Calu3 (cell line): ENCODE measurements at regions of chr5 and their contacts with region 1.

Region 1: GRCh38 chr5:148998174-148998797 is 64.6 kb downstream of the SH3TC2 start:
- DNase-seq: peak; percentile 76
- H3K4me3 Mint-ChIP-seq: no peak overlapping the region
- H3K27ac Mint-ChIP-seq: peak overlapping the region; percentile 25
- H3K4me1 Mint-ChIP-seq: peaks cover 76% of the 10 kb centered on the region
- H3K27me3 Mint-ChIP-seq: no peaks in the 10 kb centered on the region
- CTCF ChIP-seq: peak; percentile 56

Region 2: DNA sequence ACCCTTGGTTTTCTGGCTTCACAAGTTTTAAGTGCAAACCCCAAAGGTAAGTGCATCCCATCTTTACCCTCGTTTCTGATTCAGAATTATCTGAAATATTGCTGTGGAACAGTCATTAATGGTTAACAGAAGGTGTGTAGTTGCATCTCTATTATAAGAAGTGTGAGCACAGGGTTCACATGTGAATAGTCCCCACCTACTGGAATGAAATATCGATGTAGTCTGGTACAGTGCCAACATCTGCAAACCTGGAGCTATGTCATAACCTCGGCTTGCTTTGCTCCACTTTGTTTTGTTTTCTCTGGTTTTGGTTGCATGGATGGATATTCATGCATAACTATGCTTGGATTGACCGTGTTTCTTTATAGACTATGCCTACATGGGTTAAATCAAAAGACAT is 356.6 kb before region 1 on chr5:
- CTCF ChIA-PET with region 1: no interaction called
- intact Hi-C with region 1: no loop called
- DNase-seq: peak; percentile 20
- H3K4me3 Mint-ChIP-seq: no peak overlapping the region
- H3K27ac Mint-ChIP-seq: no peak overlapping the region
- H3K4me1 Mint-ChIP-seq: peaks cover 18% of the 10 kb centered on the region
- H3K27me3 Mint-ChIP-seq: peaks cover 54% of the 10 kb centered on the region
- CTCF ChIP-seq: no peak

Region 3: GRCh38 chr5:148826053-148826738 is 172.1 kb before region 1 on chr5 and contains the start of gene ADRB2:
- CTCF ChIA-PET with region 1: interaction called, 4 read pairs
- intact Hi-C with region 1: loop called (anchors 1 kb)
- DNase-seq: peak; percentile 99
- H3K4me3 Mint-ChIP-seq: peak within 1 kb of the TSS; percentile 88
- H3K27ac Mint-ChIP-seq: peak within 1 kb of the TSS; percentile 79
- H3K4me1 Mint-ChIP-seq: peaks cover 16% of the 10 kb centered on the region
- H3K27me3 Mint-ChIP-seq: no peaks in the 10 kb centered on the region
- CTCF ChIP-seq: no peak
- total RNA-seq, gene ADRB2: 16.6 and 16.9 TPM in 2 replicates

Region 4: GRCh38 chr5:148912714-148913398 is 85.4 kb before region 1 on chr5:
- CTCF ChIA-PET with region 1: interaction called, 7 read pairs
- intact Hi-C with region 1: loop called (anchors 1 kb)
- DNase-seq: peak; percentile 68
- H3K4me3 Mint-ChIP-seq: no peak overlapping the region
- H3K27ac Mint-ChIP-seq: peak overlapping the region; percentile 93
- H3K4me1 Mint-ChIP-seq: peaks cover 89% of the 10 kb centered on the region
- H3K27me3 Mint-ChIP-seq: no peaks in the 10 kb centered on the region
- CTCF ChIP-seq: peak; percentile 28

Region 5: DNA sequence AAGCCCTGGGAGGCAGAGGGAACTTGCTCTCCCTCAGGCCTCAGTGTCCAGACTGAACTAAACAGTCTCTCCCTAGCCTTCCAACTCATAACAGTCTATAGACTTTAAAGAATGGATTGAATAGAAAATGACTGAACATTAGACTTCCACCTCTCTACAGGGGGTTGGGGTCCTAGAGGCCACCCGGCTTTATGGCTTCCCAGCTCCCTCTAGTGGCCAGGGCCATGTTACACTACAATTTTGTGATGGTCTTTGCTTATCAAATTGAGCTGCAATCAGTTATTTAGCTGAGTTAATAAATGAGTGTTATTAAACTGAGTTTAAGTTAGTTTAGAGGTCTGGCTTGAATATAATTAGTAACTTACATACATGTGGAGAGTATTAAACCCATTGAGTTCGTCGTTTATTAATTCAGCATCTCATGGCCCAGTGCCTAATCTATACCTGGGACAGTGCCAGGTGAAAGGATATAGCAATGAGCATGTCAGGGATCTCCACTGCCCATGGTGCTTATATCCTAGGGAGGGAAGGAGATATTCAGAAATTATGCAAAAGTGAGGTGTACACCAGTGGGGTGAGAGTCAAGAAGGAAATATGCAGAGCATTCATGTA is 40.6 kb before region 1 on chr5:
- CTCF ChIA-PET with region 1: interaction called, 14 read pairs
- intact Hi-C with region 1: loop called (anchors 2 kb)
- DNase-seq: peak; percentile 79
- H3K4me3 Mint-ChIP-seq: no peak overlapping the region
- H3K27ac Mint-ChIP-seq: no peak overlapping the region
- H3K4me1 Mint-ChIP-seq: peaks cover 68% of the 10 kb centered on the region
- H3K27me3 Mint-ChIP-seq: no peaks in the 10 kb centered on the region
- CTCF ChIP-seq: peak; percentile 93

Region 6: DNA sequence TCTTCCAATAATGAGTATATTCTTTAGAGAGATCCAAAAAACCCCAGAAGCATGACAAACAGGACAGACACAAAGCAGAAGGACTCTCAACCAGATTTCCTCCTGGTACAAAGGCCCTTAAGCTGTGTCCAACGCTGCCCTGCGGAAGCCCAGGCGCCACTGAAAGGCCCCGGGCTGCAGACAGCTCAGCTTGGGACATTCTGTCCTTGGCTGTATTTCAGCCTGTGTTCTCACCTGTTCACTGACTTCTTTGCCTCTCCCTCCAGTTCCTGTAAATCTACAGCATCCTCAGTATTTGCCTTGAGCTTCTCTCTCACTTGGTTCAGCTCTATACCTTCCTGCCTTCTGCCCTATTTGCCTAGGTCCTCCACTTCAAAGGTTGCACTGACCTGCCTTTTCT is 31.9 kb before region 1 on chr5:
- CTCF ChIA-PET with region 1: interaction called, 3 read pairs
- intact Hi-C with region 1: loop called (anchors 2 kb)
- DNase-seq: no peak
- H3K4me3 Mint-ChIP-seq: no peak overlapping the region
- H3K27ac Mint-ChIP-seq: peak overlapping the region; percentile 99
- H3K4me1 Mint-ChIP-seq: peaks cover 79% of the 10 kb centered on the region
- H3K27me3 Mint-ChIP-seq: no peaks in the 10 kb centered on the region
- CTCF ChIP-seq: no peak

Region 7: DNA sequence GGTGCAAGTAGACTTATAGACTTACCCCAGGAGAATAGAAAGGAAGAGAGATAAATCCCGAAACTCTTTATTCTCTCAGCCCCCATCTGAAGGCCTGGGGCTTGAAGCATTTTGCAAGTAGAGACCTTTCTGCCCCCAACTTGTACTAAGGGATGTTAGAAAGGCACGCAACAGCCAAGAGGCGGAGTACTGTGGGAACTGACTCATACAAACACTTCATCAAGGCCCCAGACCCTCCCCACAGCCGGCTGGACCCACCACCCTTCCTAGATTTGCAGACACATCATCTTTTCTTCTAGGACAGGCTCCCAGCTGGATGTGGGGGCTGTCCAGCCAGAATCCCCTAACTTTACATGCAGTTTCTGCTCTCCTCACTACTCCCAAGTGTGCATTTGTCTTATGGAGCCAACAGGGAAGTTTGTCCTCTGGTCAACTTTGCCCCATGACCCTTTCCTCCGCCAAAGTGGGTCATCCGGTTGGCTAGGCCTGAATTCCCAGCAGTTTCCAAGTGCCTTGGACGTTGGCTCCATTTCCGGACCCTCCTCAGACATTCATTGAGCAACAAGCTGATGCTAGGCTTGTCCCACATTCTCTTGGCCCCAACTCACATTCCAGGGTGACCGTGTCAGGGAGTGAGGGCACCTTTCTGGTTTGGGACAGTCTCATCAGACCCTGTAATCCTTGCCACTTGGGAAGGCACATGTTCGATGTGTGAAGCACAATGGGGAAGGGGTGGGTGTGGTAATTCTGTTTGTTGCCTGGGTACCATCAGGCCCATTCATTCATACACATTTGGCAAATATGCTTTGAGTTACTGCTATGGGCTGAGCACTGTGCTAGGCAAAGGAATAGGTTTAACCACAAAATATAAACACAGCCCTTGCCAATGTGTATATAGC is 207.6 kb after region 1 on chr5:
- CTCF ChIA-PET with region 1: no interaction called
- intact Hi-C with region 1: no loop called
- DNase-seq: no peak
- H3K4me3 Mint-ChIP-seq: no peak overlapping the region
- H3K27ac Mint-ChIP-seq: no peak overlapping the region
- H3K4me1 Mint-ChIP-seq: no peaks in the 10 kb centered on the region
- H3K27me3 Mint-ChIP-seq: no peaks in the 10 kb centered on the region
- CTCF ChIP-seq: no peak

Region 8: DNA sequence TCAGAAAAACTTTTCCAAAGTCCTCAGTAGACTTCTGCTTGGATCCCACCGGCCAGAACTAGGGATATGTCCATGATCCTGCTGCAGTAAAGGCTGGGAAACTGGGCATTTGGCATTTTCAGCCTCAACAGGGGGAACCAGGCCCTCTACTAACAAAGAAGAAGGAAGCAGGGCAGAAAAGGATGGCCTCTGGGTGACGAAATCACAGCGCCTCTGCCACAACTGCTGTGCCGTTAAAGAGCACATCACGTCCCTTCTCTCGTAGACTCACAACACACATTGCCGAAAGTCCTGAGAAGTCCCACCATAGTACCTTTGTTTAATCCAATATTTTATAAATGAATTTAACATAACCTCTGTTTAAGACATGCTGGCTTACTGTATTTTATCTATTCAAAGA is 263.0 kb after region 1 on chr5:
- CTCF ChIA-PET with region 1: interaction called, 11 read pairs
- intact Hi-C with region 1: no loop called
- DNase-seq: no peak
- H3K4me3 Mint-ChIP-seq: no peak overlapping the region
- H3K27ac Mint-ChIP-seq: no peak overlapping the region
- H3K4me1 Mint-ChIP-seq: peaks cover 11% of the 10 kb centered on the region
- H3K27me3 Mint-ChIP-seq: no peaks in the 10 kb centered on the region
- CTCF ChIP-seq: no peak